ENCODE measurements at regions of chr14 and their contacts with region 1.

Region 1: DNA sequence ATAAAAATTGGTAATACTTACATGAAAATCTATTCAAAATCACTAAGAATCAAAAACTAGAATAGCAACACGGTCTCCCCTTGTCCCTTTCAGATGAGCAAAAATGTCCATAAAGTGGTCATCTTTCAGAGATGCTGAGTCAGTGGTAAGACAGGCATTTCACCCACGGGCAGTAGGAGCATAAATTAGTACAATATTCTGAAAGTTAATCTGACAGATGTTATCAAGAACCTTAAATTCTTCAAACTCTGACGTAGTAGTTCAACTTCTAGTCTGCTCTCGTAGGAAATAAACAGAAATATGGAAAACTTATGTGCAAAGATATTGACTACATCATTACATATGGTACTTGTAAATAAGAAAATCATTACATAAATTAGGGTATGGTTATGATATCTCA is 33.1 kb upstream of the GNPNAT1 start:
- DNase-seq: no peak
- ATAC-seq: no peak
- H3K4me3 ChIP-seq: no peak overlapping the region
- H3K4me3 Mint-ChIP-seq: no peak overlapping the region
- H3K27ac ChIP-seq: no peak overlapping the region
- H3K27ac Mint-ChIP-seq: no peak overlapping the region
- H3K4me1 ChIP-seq: no peaks in the 10 kb centered on the region
- H3K4me1 Mint-ChIP-seq: no peaks in the 10 kb centered on the region
- H3K27me3 ChIP-seq: peaks cover 0 to 3% (median 0%) of the 10 kb centered on the region in 4 experiments
- H3K27me3 Mint-ChIP-seq: peaks cover 19% of the 10 kb centered on the region
- CTCF ChIP-seq: no peak

Region 2: GRCh38 chr14:52473557-52473956 is 350.9 kb before region 1 on chr14:
- CTCF ChIA-PET with region 1: no interaction called
- POLR2A ChIA-PET with region 1: no interaction called
- intact Hi-C with region 1: no loop called
- DNase-seq: peak; percentile 50
- ATAC-seq: no peak
- H3K4me3 ChIP-seq: no peak overlapping the region
- H3K4me3 Mint-ChIP-seq: no peak overlapping the region
- H3K27ac ChIP-seq: no peak overlapping the region
- H3K27ac Mint-ChIP-seq: no peak overlapping the region
- H3K4me1 ChIP-seq: no peaks in the 10 kb centered on the region
- H3K4me1 Mint-ChIP-seq: no peaks in the 10 kb centered on the region
- H3K27me3 ChIP-seq: no peaks in the 10 kb centered on the region
- H3K27me3 Mint-ChIP-seq: no peaks in the 10 kb centered on the region
- CTCF ChIP-seq: peak; percentile 50

Region 3: DNA sequence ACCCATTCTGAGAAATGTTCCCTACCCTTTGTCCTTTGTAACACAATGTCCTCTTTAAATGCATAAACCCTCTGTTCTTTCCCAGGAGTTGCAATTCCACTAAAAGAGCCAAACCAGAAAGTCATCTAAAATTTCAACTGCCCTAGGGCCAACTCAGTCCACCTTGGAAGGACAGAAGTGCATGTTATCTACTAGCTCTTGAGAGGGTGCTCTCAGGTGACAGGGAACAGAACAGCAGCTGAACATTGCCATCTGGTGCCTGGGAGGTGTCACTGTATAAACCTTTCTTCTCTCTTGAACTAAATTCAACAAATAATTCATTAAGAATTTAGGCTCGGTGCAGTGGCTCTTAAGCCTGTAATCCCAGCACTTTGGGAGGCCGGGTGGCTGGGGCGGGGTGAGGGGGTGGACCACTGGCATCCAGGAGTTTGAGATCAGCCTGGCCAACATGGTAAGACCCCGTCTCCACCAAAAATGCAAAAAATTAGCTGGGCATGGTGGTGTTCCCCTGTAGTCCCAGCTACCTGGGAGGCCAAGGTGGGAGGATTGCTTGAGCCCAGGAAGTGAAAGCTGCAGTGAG is 136.6 kb after region 1 on chr14:
- CTCF ChIA-PET with region 1: interaction called, 6 read pairs
- POLR2A ChIA-PET with region 1: no interaction called
- intact Hi-C with region 1: loop called (anchors 1 kb)
- DNase-seq: peak; percentile 47
- ATAC-seq: peak; percentile 43
- H3K4me3 ChIP-seq: no peak overlapping the region
- H3K4me3 Mint-ChIP-seq: no peak overlapping the region
- H3K27ac ChIP-seq: no peak overlapping the region
- H3K27ac Mint-ChIP-seq: no peak overlapping the region
- H3K4me1 ChIP-seq: no peaks in the 10 kb centered on the region
- H3K4me1 Mint-ChIP-seq: no peaks in the 10 kb centered on the region
- H3K27me3 ChIP-seq: no peaks in the 10 kb centered on the region
- H3K27me3 Mint-ChIP-seq: no peaks in the 10 kb centered on the region
- CTCF ChIP-seq: peak; percentile 59

Region 4: GRCh38 chr14:53055003-53055402 is 230.5 kb after region 1 on chr14:
- CTCF ChIA-PET with region 1: interaction called, 4 read pairs
- POLR2A ChIA-PET with region 1: no interaction called
- intact Hi-C with region 1: loop called (anchors 1 kb)
- DNase-seq: peak; percentile 60
- ATAC-seq: peak; percentile 36
- H3K4me3 ChIP-seq: no peak overlapping the region
- H3K4me3 Mint-ChIP-seq: no peak overlapping the region
- H3K27ac ChIP-seq: no peak overlapping the region
- H3K27ac Mint-ChIP-seq: no peak overlapping the region
- H3K4me1 ChIP-seq: no peaks in the 10 kb centered on the region
- H3K4me1 Mint-ChIP-seq: no peaks in the 10 kb centered on the region
- H3K27me3 ChIP-seq: no peaks in the 10 kb centered on the region
- H3K27me3 Mint-ChIP-seq: no peaks in the 10 kb centered on the region
- CTCF ChIP-seq: peak; percentile 92